B cell (primary cell): ENCODE measurements at regions of chr2 and their contacts with region 1.

Region 1: GRCh38 chr2:59301466-59302402 is 1060.6 kb upstream of the FANCL start:
- DNase-seq: peak; percentile 80
- ATAC-seq: peak; percentile 91
- H3K4me3 ChIP-seq: no peak overlapping the region
- H3K4me3 Mint-ChIP-seq: no peak overlapping the region
- H3K27ac ChIP-seq: no peak overlapping the region
- H3K27ac Mint-ChIP-seq: no peak overlapping the region
- H3K4me1 ChIP-seq: no peaks in the 10 kb centered on the region
- H3K4me1 Mint-ChIP-seq: no peaks in the 10 kb centered on the region
- H3K27me3 ChIP-seq: no peaks in the 10 kb centered on the region
- H3K27me3 Mint-ChIP-seq: peaks cover 4% of the 10 kb centered on the region
- CTCF ChIP-seq: peak; percentile 74

Region 2: GRCh38 chr2:58156780-58157179 is 1145.0 kb before region 1 on chr2:
- CTCF ChIA-PET with region 1: no interaction called
- POLR2A ChIA-PET with region 1: no interaction called
- intact Hi-C with region 1: no loop called
- DNase-seq: no peak
- ATAC-seq: no peak
- H3K4me3 ChIP-seq: no peak overlapping the region
- H3K4me3 Mint-ChIP-seq: no peak overlapping the region
- H3K27ac ChIP-seq: no peak overlapping the region
- H3K27ac Mint-ChIP-seq: no peak overlapping the region
- H3K4me1 ChIP-seq: no peaks in the 10 kb centered on the region
- H3K4me1 Mint-ChIP-seq: no peaks in the 10 kb centered on the region
- H3K27me3 ChIP-seq: no peaks in the 10 kb centered on the region
- H3K27me3 Mint-ChIP-seq: no peaks in the 10 kb centered on the region
- CTCF ChIP-seq: no peak

Region 3: DNA sequence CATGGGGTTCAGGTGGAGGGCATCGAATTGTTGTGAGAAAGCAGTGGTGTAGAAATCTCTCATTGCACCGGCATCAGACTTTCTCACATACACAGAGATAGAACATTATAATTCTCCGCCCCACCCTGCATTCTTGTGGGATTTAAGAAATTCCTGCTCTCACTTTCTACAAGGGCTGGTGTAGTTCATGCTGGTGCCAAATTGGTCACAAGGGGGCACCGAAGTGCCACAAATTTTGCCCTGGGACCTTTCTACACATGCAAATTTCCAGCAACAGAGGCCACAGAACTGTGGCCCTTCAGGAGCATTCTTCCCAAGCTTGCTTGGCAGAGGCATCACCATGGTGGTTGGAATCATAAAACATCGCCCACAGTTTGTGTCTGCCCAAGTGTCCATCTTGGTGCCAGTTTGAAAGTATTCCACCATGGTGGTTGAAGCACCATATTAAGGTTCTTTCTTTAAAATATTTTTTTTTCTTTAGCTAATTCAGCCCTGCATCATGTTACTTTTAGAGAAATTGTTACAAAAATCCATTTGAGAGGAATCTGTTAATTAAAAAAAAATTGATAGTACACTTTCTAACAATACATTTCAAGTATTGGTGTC is 539.5 kb before region 1 on chr2:
- CTCF ChIA-PET with region 1: no interaction called
- POLR2A ChIA-PET with region 1: no interaction called
- intact Hi-C with region 1: loop called (anchors 10 kb)
- DNase-seq: peak; percentile 65
- ATAC-seq: peak; percentile 74
- H3K4me3 ChIP-seq: no peak overlapping the region
- H3K4me3 Mint-ChIP-seq: no peak overlapping the region
- H3K27ac ChIP-seq: no peak overlapping the region
- H3K27ac Mint-ChIP-seq: no peak overlapping the region
- H3K4me1 ChIP-seq: peaks cover 7 to 8% of the 10 kb centered on the region in 2 donors
- H3K4me1 Mint-ChIP-seq: peaks cover 8% of the 10 kb centered on the region
- H3K27me3 ChIP-seq: no peaks in the 10 kb centered on the region
- H3K27me3 Mint-ChIP-seq: peaks cover 4% of the 10 kb centered on the region
- CTCF ChIP-seq: peak; percentile 82

Region 4: GRCh38 chr2:59034837-59035236 is 266.9 kb before region 1 on chr2:
- CTCF ChIA-PET with region 1: no interaction called
- POLR2A ChIA-PET with region 1: no interaction called
- intact Hi-C with region 1: loop called (anchors 5 kb)
- DNase-seq: no peak
- ATAC-seq: no peak
- H3K4me3 ChIP-seq: no peak overlapping the region
- H3K4me3 Mint-ChIP-seq: no peak overlapping the region
- H3K27ac ChIP-seq: no peak overlapping the region
- H3K27ac Mint-ChIP-seq: no peak overlapping the region
- H3K4me1 ChIP-seq: no peaks in the 10 kb centered on the region
- H3K4me1 Mint-ChIP-seq: no peaks in the 10 kb centered on the region
- H3K27me3 ChIP-seq: no peaks in the 10 kb centered on the region
- H3K27me3 Mint-ChIP-seq: peaks cover 27% of the 10 kb centered on the region
- CTCF ChIP-seq: no peak

Region 5: GRCh38 chr2:59066787-59067405 is 234.8 kb before region 1 on chr2:
- CTCF ChIA-PET with region 1: no interaction called
- POLR2A ChIA-PET with region 1: no interaction called
- intact Hi-C with region 1: no loop called
- DNase-seq: no peak
- ATAC-seq: no peak
- H3K4me3 ChIP-seq: no peak overlapping the region
- H3K4me3 Mint-ChIP-seq: no peak overlapping the region
- H3K27ac ChIP-seq: no peak overlapping the region
- H3K27ac Mint-ChIP-seq: no peak overlapping the region
- H3K4me1 ChIP-seq: no peaks in the 10 kb centered on the region
- H3K4me1 Mint-ChIP-seq: no peaks in the 10 kb centered on the region
- H3K27me3 ChIP-seq: no peaks in the 10 kb centered on the region
- H3K27me3 Mint-ChIP-seq: peaks cover 9% of the 10 kb centered on the region
- CTCF ChIP-seq: no peak

Region 6: GRCh38 chr2:59288771-59289170 is 13.0 kb before region 1 on chr2:
- CTCF ChIA-PET with region 1: interaction called, 6 read pairs
- POLR2A ChIA-PET with region 1: no interaction called
- intact Hi-C with region 1: loop called (anchors 2 kb)
- DNase-seq: no peak
- ATAC-seq: no peak
- H3K4me3 ChIP-seq: no peak overlapping the region
- H3K4me3 Mint-ChIP-seq: no peak overlapping the region
- H3K27ac ChIP-seq: no peak overlapping the region
- H3K27ac Mint-ChIP-seq: no peak overlapping the region
- H3K4me1 ChIP-seq: no peaks in the 10 kb centered on the region
- H3K4me1 Mint-ChIP-seq: no peaks in the 10 kb centered on the region
- H3K27me3 ChIP-seq: peaks cover 0 to 5% (median 0%) of the 10 kb centered on the region in 4 experiments
- H3K27me3 Mint-ChIP-seq: peaks cover 34% of the 10 kb centered on the region
- CTCF ChIP-seq: no peak

Region 7: DNA sequence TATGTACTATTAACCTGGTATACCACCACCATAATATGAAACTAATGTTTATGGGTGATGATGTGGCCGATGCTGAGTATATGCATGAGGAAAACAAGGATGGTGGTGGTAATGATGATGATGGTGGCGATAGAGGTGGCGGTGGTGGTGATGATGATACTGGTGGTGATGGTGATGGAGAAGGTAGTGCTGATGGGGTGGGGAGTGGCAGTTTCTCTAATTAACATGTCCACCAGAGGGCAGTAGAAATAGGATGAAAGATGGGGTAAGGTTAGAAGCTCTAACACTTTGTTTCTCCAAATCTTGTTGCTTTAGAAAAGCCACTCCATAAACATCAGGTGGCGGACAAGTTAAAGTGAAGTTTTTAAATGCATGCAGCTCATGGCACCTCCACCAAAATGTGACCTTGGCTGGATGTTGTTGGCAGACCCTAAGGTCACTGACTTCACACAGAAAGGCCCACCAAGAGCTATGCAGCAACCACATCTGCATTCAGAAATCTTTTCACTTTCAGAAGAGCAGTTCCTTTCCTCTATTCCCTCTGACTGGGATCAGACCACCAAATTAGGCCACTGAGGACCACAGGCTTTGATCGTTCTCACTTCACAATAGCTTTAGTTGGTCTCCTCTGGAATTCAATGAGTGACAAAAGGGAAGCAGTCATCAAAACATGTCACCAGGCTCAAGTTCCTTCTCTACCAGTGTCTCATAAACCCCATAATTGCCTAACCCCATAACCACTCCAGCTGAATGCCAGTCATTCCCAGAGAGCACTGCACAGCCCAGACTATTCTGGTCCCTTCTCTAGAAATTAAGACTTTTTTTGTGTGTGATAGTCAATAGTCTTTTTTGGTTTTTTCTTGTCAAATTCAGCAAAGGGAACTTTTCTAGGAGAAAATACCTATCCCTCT is 1259.3 kb after region 1 on chr2:
- CTCF ChIA-PET with region 1: interaction called, 22 read pairs
- POLR2A ChIA-PET with region 1: no interaction called
- intact Hi-C with region 1: loop called (anchors 1 kb)
- DNase-seq: peak; percentile 75
- ATAC-seq: peak; percentile 53
- H3K4me3 ChIP-seq: no peak overlapping the region
- H3K4me3 Mint-ChIP-seq: no peak overlapping the region
- H3K27ac ChIP-seq: no peak overlapping the region
- H3K27ac Mint-ChIP-seq: peak overlapping the region; percentile 70
- H3K4me1 ChIP-seq: peaks cover 18% of the 10 kb centered on the region in 2 donors
- H3K4me1 Mint-ChIP-seq: peaks cover 37% of the 10 kb centered on the region
- H3K27me3 ChIP-seq: no peaks in the 10 kb centered on the region
- H3K27me3 Mint-ChIP-seq: no peaks in the 10 kb centered on the region
- CTCF ChIP-seq: peak; percentile 63